PC-3 (cell line): ENCODE measurements at regions of chr9 and their contacts with region 1.

Region 1: DNA sequence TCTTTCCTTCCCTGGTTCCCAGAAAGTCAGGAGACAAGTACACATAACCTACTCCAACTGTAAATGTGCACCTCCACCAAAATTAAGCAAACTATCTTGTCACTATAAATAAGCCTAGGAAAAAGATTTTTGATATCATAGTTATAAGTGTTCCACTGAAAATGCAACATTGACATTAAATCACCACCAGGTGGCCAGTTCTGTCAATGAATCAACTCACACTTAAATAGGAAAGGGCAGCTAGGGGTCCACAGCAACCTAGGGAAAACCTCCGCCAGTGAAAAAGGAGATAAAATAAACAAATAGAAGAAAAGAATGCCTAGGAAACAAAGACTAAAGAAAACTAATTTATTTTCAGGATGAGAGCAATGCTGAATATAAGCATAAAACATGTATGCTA is 243.1 kb upstream of the PTPRD start:
- DNase-seq: peak; percentile 14
- ATAC-seq: no peak
- H3K4me3 ChIP-seq: no peak overlapping the region
- H3K27ac ChIP-seq: no peak overlapping the region
- H3K4me1 ChIP-seq: no peaks in the 10 kb centered on the region
- H3K27me3 ChIP-seq: no peaks in the 10 kb centered on the region
- CTCF ChIP-seq: peak; percentile 56

Region 2: DNA sequence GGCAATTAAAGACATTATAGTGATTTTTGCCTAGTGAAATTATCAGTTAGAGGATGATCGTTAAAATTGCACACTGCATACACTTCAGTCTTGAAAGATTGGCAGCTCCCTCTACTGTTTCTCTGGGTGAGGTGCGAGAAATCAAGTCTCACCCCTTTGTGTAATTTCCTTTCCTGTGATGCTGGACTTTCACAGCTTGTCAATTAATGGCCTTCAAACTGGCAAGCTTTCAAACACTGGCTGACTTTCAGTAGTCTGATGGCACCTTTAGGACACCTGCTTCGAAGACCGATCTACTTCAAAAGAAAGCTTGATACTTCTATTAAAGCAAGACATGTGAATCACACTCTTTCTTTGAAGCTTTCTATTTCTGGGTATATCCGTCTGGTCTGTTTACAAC is 463.7 kb after region 1 on chr9:
- CTCF ChIA-PET with region 1: interaction called, 5 read pairs
- POLR2A ChIA-PET with region 1: no interaction called
- intact Hi-C with region 1: loop called (anchors 1 kb)
- DNase-seq: peak; percentile 33
- ATAC-seq: peak; percentile 85
- H3K4me3 ChIP-seq: no peak overlapping the region
- H3K27ac ChIP-seq: no peak overlapping the region
- H3K4me1 ChIP-seq: no peaks in the 10 kb centered on the region; the same call in 1 of the 2 replicates
- H3K27me3 ChIP-seq: no peaks in the 10 kb centered on the region
- CTCF ChIP-seq: peak; percentile 60